Adrenal gland (tissue), 19 donors: ENCODE measurements at regions of chr12 and their contacts with region 1.

Region 1: GRCh38 chr12:75334384-75335030 is at the start of gene GLIPR1L1:
- DNase-seq: peak; percentile 89 to 97 (median 93)
- H3K4me3 ChIP-seq: peak within 1 kb of the TSS in 2 of 4 donors; percentile 7 to 50
- H3K27ac ChIP-seq: peak within 1 kb of the TSS in 1 of 5 donors; percentile 53
- H3K4me1 ChIP-seq: peaks cover 0 to 13% of the 10 kb centered on the region in 2 donors
- H3K27me3 ChIP-seq: no peaks in the 10 kb centered on the region
- CTCF ChIP-seq: peak; percentile 90 to 95 (median 94)
- POLR2A ChIP-seq: no peak
- total RNA-seq, gene GLIPR1L1: not detected

Region 2: GRCh38 chr12:75389061-75389460 is 54.6 kb after region 1 on chr12:
- intact Hi-C with region 1: loop called in 1 of 2 experiments (anchors 10 kb)
- DNase-seq: no peak
- H3K4me3 ChIP-seq: peak overlapping the region in 1 of 4 donors; percentile 71
- H3K27ac ChIP-seq: peak overlapping the region in 3 of 5 donors; percentile 91 to 96 (median 93)
- H3K4me1 ChIP-seq: peaks cover 13 to 19% of the 10 kb centered on the region in 2 donors
- H3K27me3 ChIP-seq: no peaks in the 10 kb centered on the region
- CTCF ChIP-seq: no peak
- POLR2A ChIP-seq: no peak

Region 3: GRCh38 chr12:75505706-75506312 is 171.3 kb after region 1 on chr12:
- intact Hi-C with region 1: loop called in 1 of 2 experiments (anchors 10 kb)
- DNase-seq: no peak
- H3K4me3 ChIP-seq: no peak overlapping the region
- H3K27ac ChIP-seq: no peak overlapping the region
- H3K4me1 ChIP-seq: peaks cover 11 to 33% of the 10 kb centered on the region in 2 donors
- H3K27me3 ChIP-seq: no peaks in the 10 kb centered on the region
- CTCF ChIP-seq: peak; percentile 36 to 70 (median 52)
- POLR2A ChIP-seq: no peak